Mammary epithelial cell (primary cell): ENCODE measurements at regions of chr18 and their contacts with region 1.

Region 1: DNA sequence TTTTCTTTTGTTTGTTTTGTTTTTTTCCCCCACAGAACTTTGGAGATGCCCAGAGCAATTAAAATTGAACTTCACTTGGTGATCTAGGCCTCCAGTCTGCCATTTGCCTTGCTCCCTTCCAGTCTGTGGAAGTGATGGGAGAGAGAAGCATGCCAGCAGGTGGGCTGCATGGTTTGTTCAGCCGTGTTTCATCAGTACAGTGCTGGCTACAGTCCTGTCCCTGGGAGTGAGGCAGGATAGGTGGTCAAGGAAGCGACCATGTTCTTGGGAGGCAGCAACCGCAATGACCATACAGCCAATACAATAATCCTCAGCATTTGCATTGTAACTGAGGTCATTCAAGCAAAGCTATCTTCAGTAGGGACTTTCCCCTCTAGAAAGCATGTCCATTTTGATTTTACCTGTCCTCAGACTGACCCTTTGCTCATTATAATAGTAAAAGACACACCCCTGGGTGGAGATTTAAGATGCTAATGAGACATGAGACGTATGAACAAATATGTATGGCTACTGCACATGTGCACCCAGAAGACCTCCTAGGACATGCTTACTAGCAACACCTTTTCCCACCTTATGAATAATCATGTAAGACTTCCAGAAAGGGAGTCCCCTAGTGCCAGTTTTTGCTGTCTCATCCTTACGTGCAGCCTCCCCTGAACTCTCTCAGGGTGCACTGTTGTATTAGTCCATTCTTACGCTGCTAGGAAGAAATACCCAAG is 11.1 kb upstream of the LIPG start:
- DNase-seq: no peak
- H3K4me3 ChIP-seq: no peak overlapping the region
- H3K27ac ChIP-seq: no peak overlapping the region
- H3K4me1 ChIP-seq: peaks cover 6% of the 10 kb centered on the region
- H3K27me3 ChIP-seq: no peaks in the 10 kb centered on the region
- CTCF ChIP-seq: no peak

Region 2: DNA sequence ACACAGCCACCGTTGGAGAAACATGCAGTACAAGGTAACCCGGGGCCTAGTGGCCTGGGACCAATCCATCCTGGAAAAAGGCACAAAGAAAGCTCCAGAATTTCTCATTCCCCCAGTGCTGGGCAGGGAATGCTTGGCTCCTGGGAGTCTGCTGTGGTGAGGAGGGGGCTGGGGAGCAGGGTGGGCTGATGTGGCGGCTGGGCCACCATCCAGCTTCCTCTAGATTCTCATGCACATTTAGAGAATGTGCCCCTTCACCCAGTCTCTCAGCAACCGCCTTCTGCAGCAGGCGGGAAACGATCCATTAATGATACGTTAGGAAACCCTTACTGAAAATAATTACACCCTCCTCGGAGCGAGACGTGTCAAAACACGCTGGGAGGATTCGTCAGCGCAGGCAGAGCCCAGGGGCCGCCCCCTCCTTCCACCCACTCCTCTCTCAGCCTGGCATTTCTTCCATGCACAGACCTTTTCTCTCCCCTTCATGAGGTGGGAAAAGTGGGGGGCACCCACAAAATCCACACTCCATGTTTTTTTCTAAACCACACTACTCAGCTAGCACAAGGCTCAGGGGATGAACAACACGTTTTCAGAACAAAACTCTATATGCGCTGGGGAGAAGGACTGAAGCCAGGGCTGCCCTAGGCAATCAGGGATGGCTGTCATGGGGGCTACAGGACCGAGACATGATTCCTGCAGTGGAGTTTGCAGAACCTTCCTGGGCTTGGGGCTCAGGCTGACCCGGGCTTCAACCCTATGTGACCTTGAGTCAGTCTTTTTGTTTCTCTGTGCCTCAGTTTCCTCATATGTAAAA is 543.9 kb before region 1 on chr18:
- CTCF ChIA-PET with region 1: no interaction called
- dilution Hi-C with region 1: no loop called
- in situ Hi-C with region 1: no loop called
- intact Hi-C with region 1: no loop called
- DNase-seq: peak; percentile 74
- H3K4me3 ChIP-seq: no peak overlapping the region
- H3K27ac ChIP-seq: peak overlapping the region; percentile 4
- H3K4me1 ChIP-seq: peaks cover 13% of the 10 kb centered on the region
- H3K27me3 ChIP-seq: no peaks in the 10 kb centered on the region
- CTCF ChIP-seq: no peak

Region 3: GRCh38 chr18:49491857-49492693 is 58.7 kb before region 1 on chr18:
- CTCF ChIA-PET with region 1: no interaction called
- dilution Hi-C with region 1: no loop called
- in situ Hi-C with region 1: no loop called
- intact Hi-C with region 1: no loop called
- DNase-seq: peak; percentile 98
- H3K4me3 ChIP-seq: peak within 1 kb of the TSS; percentile 56 to 82 (median 65)
- H3K27ac ChIP-seq: peak within 1 kb of the TSS; percentile 91
- H3K4me1 ChIP-seq: peaks cover 32% of the 10 kb centered on the region
- H3K27me3 ChIP-seq: no peaks in the 10 kb centered on the region
- CTCF ChIP-seq: no peak

Region 4: DNA sequence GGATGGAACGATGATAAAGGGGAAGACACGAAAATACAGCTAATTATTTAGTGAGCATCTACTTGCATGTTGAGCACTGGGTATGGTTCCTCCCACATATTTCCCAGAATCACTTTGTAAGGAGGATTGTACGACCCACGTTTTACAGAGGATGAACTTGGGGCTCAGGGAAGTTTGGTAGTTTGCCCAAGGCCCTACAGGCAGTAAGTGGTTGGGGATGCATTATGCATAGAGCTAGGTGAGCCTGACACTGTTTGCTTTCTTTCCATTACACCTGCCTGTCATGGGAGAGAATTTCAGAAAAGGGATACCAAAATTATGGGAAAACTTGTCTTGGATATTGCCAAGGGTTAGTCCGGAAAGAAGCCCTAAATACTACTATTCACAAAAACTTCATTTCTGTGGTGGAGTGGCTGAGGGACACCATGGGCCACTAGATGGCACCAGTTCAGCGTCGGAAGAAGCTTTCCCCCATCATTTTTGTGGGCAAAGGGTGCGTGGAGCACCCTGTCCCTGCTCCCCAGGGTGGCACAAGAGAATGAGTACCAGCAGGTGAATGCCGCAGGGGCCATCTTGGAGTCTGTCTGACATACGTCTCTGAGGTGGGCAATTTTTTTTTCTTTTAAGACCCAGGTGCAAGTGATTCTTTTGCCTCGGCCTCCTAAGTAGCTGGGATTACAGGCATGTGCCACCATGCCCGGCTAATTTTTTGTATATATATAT is 40.2 kb before region 1 on chr18:
- CTCF ChIA-PET with region 1: interaction called, 16 read pairs
- dilution Hi-C with region 1: no loop called
- in situ Hi-C with region 1: no loop called
- intact Hi-C with region 1: no loop called
- DNase-seq: peak; percentile 46
- H3K4me3 ChIP-seq: no peak overlapping the region
- H3K27ac ChIP-seq: no peak overlapping the region
- H3K4me1 ChIP-seq: no peaks in the 10 kb centered on the region
- H3K27me3 ChIP-seq: no peaks in the 10 kb centered on the region
- CTCF ChIP-seq: peak; percentile 92 to 93

Region 5: GRCh38 chr18:49531678-49532153 is 19.1 kb before region 1 on chr18:
- CTCF ChIA-PET with region 1: no interaction called
- dilution Hi-C with region 1: no loop called
- in situ Hi-C with region 1: no loop called
- intact Hi-C with region 1: no loop called
- DNase-seq: no peak
- H3K4me3 ChIP-seq: no peak overlapping the region
- H3K27ac ChIP-seq: no peak overlapping the region
- H3K4me1 ChIP-seq: no peaks in the 10 kb centered on the region
- H3K27me3 ChIP-seq: no peaks in the 10 kb centered on the region
- CTCF ChIP-seq: no peak

Region 6: DNA sequence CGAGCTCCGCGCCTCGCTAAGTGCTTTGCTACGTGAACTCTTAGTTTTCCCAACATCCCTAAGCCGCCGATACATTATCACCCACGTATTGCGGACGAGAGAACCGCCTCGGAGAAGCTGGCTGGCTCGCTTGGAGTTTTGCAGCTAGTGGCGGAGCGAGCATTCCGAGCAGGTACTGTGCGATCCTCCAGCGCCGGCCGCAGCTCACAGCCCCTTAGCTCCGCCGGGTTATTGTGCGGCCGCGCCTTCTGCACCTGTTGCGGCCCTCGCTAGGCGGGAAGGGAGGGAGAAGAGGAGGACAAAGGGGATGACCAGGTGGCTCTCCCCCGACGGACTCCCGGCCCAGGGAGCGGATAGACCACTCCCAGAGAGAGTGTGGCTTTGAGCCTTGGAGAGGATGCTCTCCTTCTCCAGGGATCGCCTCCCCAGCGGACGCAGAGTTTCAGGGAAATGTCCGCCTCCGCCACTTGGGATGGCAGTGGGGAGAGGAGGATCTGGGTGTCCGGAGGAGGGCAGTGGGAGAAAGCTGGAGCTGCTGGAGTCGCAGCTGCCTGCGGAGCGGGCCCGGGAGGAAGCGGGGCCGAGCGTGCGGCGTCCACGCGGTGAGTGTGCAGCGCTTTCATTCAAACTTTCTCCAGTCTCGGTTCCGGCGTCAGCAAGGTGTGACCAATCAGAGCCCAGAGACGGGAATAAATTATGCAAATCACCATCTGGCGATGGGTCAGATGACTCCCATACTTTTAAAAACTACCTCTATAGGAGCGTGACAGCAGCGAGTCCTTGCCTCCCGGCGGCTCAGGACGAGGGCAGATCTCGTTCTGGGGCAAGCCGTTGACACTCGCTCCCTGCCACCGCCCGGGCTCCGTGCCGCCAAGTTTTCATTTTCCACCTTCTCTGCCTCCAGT is 10.8 kb after region 1 on chr18 and contains the start of gene LIPG:
- CTCF ChIA-PET with region 1: no interaction called
- dilution Hi-C with region 1: no loop called
- in situ Hi-C with region 1: no loop called
- intact Hi-C with region 1: no loop called
- DNase-seq: peak; percentile 97
- H3K4me3 ChIP-seq: peak within 1 kb of the TSS; percentile 40 to 70 (median 61)
- H3K27ac ChIP-seq: peak within 1 kb of the TSS; percentile 65
- H3K4me1 ChIP-seq: peaks cover 28% of the 10 kb centered on the region
- H3K27me3 ChIP-seq: no peaks in the 10 kb centered on the region
- CTCF ChIP-seq: no peak
- total RNA-seq, gene LIPG: 78.8 to 153 TPM

Region 7: GRCh38 chr18:49619801-49620200 is 69.0 kb after region 1 on chr18:
- CTCF ChIA-PET with region 1: no interaction called
- dilution Hi-C with region 1: loop called (anchors 5 kb)
- in situ Hi-C with region 1: no loop called
- intact Hi-C with region 1: no loop called
- DNase-seq: peak; percentile 69
- H3K4me3 ChIP-seq: no peak overlapping the region
- H3K27ac ChIP-seq: no peak overlapping the region
- H3K4me1 ChIP-seq: peaks cover 10% of the 10 kb centered on the region
- H3K27me3 ChIP-seq: no peaks in the 10 kb centered on the region
- CTCF ChIP-seq: no peak